ENCODE measurements at regions of chr19 and their contacts with region 1.

Region 1: GRCh38 chr19:49473868-49474544 is at the start of gene FLT3LG:
- DNase-seq: peak; percentile 94
- ATAC-seq: peak; percentile 47
- H3K4me3 Mint-ChIP-seq: peak within 1 kb of the TSS; percentile 73
- H3K27ac Mint-ChIP-seq: peak within 1 kb of the TSS; percentile 84
- H3K4me1 Mint-ChIP-seq: peaks cover 58% of the 10 kb centered on the region
- H3K27me3 Mint-ChIP-seq: no peaks in the 10 kb centered on the region
- total RNA-seq, gene FLT3LG: 38.6 to 43.2 TPM

Region 2: DNA sequence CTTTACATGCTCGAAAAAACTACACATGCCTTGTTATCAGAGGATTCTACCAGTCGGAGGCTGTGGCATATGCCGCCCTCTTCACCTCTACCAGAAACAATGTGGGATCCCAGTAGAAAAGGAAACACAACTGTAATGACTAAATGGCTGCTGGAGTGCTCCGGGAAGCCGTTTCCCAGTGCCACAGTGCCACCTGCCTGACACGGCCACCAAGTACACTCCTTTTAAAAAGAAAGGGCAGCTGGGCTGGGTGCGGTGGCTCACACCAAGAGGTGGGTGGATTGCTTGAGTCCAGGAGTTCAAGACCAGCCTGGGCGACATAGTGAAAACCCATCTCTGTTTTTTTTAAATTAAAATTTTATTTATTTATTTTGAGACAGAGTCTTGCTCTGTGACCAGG is 249.2 kb before region 1 on chr19:
- CTCF ChIA-PET with region 1: interaction called, 4 read pairs
- POLR2A ChIA-PET with region 1: no interaction called
- intact Hi-C with region 1: loop called in 1 of 2 experiments (anchors 1 kb)
- DNase-seq: peak; percentile 74
- ATAC-seq: peak; percentile 78
- H3K4me3 Mint-ChIP-seq: no peak overlapping the region
- H3K27ac Mint-ChIP-seq: no peak overlapping the region
- H3K4me1 Mint-ChIP-seq: peaks cover 4% of the 10 kb centered on the region
- H3K27me3 Mint-ChIP-seq: peaks cover 4% of the 10 kb centered on the region

Region 3: GRCh38 chr19:49363268-49364082 is 110.5 kb before region 1 on chr19 and contains the start of gene DKKL1:
- CTCF ChIA-PET with region 1: interaction called, 4 read pairs
- POLR2A ChIA-PET with region 1: no interaction called
- intact Hi-C with region 1: loop called in 1 of 2 experiments (anchors 1 kb)
- DNase-seq: peak; percentile 92
- ATAC-seq: peak; percentile 88
- H3K4me3 Mint-ChIP-seq: no peak within 1 kb of the TSS
- H3K27ac Mint-ChIP-seq: no peak within 1 kb of the TSS
- H3K4me1 Mint-ChIP-seq: peaks cover 11% of the 10 kb centered on the region
- H3K27me3 Mint-ChIP-seq: peaks cover 23% of the 10 kb centered on the region
- total RNA-seq, gene DKKL1: not detected

Region 4: DNA sequence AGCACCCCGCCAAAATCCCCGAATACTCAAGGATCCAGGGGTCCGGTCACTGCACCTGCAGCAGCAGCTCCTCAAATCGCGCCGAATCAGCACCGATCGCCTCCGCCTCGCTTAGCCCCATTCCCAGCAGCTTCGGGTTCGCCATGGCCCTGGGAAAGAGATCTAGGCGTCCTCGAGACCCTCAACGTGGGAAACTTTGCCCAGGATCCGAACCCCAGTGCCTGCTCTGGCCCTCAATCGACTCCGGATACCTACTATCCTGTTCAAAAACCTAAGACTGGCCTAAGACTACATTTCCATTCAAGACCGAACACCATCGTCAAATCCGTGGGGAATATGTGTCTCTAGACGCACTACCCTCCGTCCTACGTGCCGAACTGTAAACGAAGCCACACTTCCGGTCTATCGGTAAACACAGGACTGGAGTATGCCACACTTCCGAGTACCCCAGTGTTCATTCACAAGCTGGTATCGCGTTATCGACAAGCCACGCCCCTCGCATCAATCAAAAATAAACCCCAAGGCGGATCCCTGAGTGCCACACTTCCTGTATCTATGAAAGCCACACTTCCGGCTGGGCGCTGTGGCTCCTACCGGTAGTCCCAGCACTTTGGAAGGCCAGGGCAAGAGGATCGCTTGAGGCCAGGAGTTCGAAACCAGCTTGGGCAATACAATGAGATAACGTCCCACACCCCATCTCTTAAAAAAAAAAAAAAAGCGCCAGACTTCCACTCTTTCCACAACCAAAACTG is 22.4 kb before region 1 on chr19 and contains the start of gene PIH1D1:
- CTCF ChIA-PET with region 1: interaction called, 23 read pairs
- POLR2A ChIA-PET with region 1: interaction called, 18 read pairs
- intact Hi-C with region 1: loop called (anchors 1 kb)
- DNase-seq: peak; percentile 98
- ATAC-seq: peak; percentile 71
- H3K4me3 Mint-ChIP-seq: peak within 1 kb of the TSS; percentile 100
- H3K27ac Mint-ChIP-seq: peak within 1 kb of the TSS; percentile 100
- H3K4me1 Mint-ChIP-seq: peaks cover 50% of the 10 kb centered on the region
- H3K27me3 Mint-ChIP-seq: no peaks in the 10 kb centered on the region
- total RNA-seq, gene PIH1D1: 117 to 138 TPM

Region 5: DNA sequence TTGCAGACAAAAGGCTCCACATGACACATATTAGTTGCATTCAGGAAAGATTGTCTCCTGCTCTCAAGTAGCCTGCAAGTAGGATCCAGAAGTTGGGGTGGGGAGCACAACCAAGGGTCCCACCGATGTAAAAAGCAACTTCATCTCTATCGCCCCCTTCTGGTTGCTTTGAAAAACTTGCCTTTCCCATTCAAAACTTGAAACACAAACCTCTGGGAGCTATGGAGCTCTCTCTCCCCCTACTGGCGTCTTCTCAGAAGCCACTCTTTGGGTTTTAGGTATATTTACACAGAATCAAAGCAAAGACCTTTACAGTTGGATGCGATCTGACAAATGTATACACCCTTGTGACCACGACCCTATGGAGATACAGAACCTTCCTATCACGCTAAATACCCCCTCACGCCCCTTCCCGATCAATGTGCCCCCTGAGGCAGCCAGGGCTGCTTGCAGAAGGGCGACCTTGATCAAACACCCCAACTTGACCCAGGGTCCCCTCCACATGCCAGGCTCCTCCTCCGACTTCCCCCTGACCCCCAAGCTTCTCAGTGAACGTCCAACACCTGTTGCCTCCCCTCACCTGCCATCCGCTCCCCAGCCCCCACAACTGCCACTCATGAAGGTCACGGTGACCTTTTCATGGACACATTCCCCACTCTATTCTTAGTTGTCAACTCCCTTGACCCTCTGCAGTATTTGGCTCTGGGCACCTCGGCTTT is 96.3 kb after region 1 on chr19:
- CTCF ChIA-PET with region 1: interaction called, 6 read pairs
- POLR2A ChIA-PET with region 1: interaction called, 4 read pairs
- intact Hi-C with region 1: loop called in 1 of 2 experiments (anchors 1 kb)
- DNase-seq: peak; percentile 82
- ATAC-seq: peak; percentile 54
- H3K4me3 Mint-ChIP-seq: peak overlapping the region; percentile 16
- H3K27ac Mint-ChIP-seq: peak overlapping the region; percentile 76
- H3K4me1 Mint-ChIP-seq: peaks cover 56% of the 10 kb centered on the region
- H3K27me3 Mint-ChIP-seq: no peaks in the 10 kb centered on the region